ENCODE measurements at regions of chr3 and their contacts with region 1.

Region 1: GRCh38 chr3:50358911-50359759 is at the start of gene TMEM115:
- DNase-seq: peak; percentile 87 to 99 (median 94)
- ATAC-seq: peak; percentile 100
- H3K4me3 ChIP-seq: peak within 1 kb of the TSS; percentile 58 to 76
- H3K4me3 Mint-ChIP-seq: peak within 1 kb of the TSS; percentile 97
- H3K27ac ChIP-seq: peak within 1 kb of the TSS; percentile 58 to 86
- H3K27ac Mint-ChIP-seq: peak within 1 kb of the TSS; percentile 97
- H3K4me1 ChIP-seq: peaks cover 33% of the 10 kb centered on the region
- H3K4me1 Mint-ChIP-seq: peaks cover 52% of the 10 kb centered on the region
- H3K27me3 ChIP-seq: no peaks in the 10 kb centered on the region
- H3K27me3 Mint-ChIP-seq: no peaks in the 10 kb centered on the region
- CTCF ChIP-seq: no peak
- total RNA-seq, gene TMEM115: 15.2 to 17.8 TPM

Region 2: GRCh38 chr3:50088725-50089608 is 270.2 kb before region 1 on chr3 and contains the start of gene RBM5:
- CTCF ChIA-PET with region 1: no interaction called
- POLR2A ChIA-PET with region 1: no interaction called
- intact Hi-C with region 1: loop called in 1 of 2 experiments (anchors 2 kb)
- DNase-seq: peak; percentile 80 to 94 (median 92)
- ATAC-seq: peak; percentile 99
- H3K4me3 ChIP-seq: peak within 1 kb of the TSS; percentile 100
- H3K4me3 Mint-ChIP-seq: peak within 1 kb of the TSS; percentile 96
- H3K27ac ChIP-seq: peak within 1 kb of the TSS; percentile 97 to 99
- H3K27ac Mint-ChIP-seq: peak within 1 kb of the TSS; percentile 98
- H3K4me1 ChIP-seq: peaks cover 27% of the 10 kb centered on the region
- H3K4me1 Mint-ChIP-seq: peaks cover 34% of the 10 kb centered on the region
- H3K27me3 ChIP-seq: no peaks in the 10 kb centered on the region
- H3K27me3 Mint-ChIP-seq: no peaks in the 10 kb centered on the region
- CTCF ChIP-seq: no peak
- total RNA-seq, gene RBM5: 376 to 409 TPM

Region 3: DNA sequence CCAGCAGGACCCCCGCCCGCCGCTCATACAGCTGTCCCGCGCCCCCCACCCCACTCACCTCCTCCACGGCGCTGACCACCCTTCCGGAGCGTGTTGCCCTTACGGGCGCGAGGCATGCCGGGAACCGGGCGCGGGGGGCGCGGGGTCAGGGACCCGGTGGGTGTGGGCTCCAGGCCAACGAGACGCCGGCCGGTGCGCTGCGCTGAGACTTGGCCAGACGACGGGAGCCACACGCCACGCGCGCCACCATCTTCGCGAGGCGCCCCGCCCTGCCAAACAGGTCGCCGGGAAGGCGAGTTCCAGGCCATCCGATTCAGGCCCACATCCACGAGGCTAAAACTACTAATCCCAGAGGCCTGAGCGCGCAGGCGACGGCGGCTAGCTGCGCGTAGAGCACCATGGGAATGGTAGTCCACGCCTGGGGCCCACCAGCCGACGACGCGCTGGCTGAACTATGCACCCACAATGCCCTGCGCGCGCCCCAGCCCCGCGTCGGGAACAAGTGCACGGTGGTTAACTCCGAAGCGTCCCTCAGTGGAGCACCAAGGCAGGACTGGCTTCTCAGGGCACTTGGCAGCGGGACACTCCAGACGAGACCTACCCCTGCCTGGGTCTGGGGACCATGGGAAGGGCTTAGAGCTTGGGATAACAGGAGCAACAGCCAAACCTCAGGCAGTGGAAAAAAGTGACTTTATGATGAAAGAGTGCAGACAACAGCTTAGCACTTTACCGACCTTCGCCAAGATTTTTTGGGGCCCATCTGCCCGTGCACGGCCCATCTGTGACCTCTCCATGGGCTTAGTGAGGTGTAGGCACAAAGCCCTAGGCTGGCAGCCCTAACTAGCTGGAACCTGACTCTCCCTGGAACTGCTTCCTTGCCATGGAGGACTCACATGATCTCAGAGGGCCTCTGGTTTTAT is 66.7 kb before region 1 on chr3 and contains the start of gene IFRD2:
- CTCF ChIA-PET with region 1: no interaction called
- POLR2A ChIA-PET with region 1: no interaction called
- intact Hi-C with region 1: loop called (anchors 1 kb)
- DNase-seq: peak in 8 of 9 experiments; percentile 92 to 98 (median 94)
- ATAC-seq: peak; percentile 98
- H3K4me3 ChIP-seq: peak within 1 kb of the TSS; percentile 87 to 88
- H3K4me3 Mint-ChIP-seq: peak within 1 kb of the TSS; percentile 89
- H3K27ac ChIP-seq: peak within 1 kb of the TSS; percentile 68 to 81
- H3K27ac Mint-ChIP-seq: peak within 1 kb of the TSS; percentile 96
- H3K4me1 ChIP-seq: peaks cover 13% of the 10 kb centered on the region
- H3K4me1 Mint-ChIP-seq: peaks cover 18% of the 10 kb centered on the region
- H3K27me3 ChIP-seq: no peaks in the 10 kb centered on the region
- H3K27me3 Mint-ChIP-seq: no peaks in the 10 kb centered on the region
- CTCF ChIP-seq: no peak
- total RNA-seq, gene IFRD2: 42.4 to 42.9 TPM

Region 4: DNA sequence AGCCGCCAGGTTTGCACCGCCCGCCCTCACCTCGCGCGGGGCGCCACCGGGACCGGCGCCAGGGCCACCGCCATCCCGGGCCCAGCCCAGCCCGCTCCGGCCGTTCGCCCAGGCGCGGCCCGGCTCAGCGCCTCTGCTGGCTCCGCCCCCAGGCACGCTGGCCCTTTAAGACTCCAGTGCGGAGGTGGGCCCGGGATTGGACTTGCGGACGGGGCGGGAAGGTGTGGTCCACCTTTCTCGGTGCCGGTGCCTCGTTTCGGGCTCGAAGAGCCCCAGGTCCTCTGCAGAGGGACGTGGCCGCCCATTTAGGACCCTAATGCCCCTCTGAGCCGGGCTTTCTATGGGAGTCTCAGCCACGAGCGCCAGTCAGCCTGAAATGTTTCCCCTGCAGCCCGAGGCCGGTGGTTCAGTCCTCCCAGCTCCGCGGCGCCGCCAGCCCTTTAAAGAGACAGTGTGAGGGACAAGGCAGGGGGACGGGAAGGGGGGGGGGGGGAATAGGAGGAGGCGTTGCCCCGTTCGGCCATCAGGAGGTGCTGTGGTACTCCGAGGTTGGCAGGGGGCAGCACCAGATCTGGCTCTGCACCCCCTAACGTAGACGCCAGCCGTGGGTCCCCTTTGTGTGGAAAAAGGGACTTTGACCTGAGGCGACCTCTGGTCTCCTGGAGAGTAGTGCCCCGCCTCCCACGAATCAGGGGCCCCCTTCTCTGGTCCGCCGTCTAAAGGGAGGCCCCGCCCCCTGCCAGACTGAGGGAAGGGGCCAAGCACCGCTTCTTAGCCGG is 37.6 kb before region 1 on chr3:
- CTCF ChIA-PET with region 1: interaction called, 3 read pairs
- POLR2A ChIA-PET with region 1: no interaction called
- intact Hi-C with region 1: loop called in 1 of 2 experiments (anchors 2 kb)
- DNase-seq: peak; percentile 65 to 89 (median 82)
- ATAC-seq: peak; percentile 69
- H3K4me3 ChIP-seq: peak overlapping the region; percentile 71 to 96
- H3K4me3 Mint-ChIP-seq: peak overlapping the region; percentile 85
- H3K27ac ChIP-seq: peak overlapping the region; percentile 77 to 94
- H3K27ac Mint-ChIP-seq: peak overlapping the region; percentile 92
- H3K4me1 ChIP-seq: peaks cover 30% of the 10 kb centered on the region
- H3K4me1 Mint-ChIP-seq: peaks cover 41% of the 10 kb centered on the region
- H3K27me3 ChIP-seq: no peaks in the 10 kb centered on the region
- H3K27me3 Mint-ChIP-seq: no peaks in the 10 kb centered on the region
- CTCF ChIP-seq: peak; percentile 47

Region 5: GRCh38 chr3:50337191-50337841 is 21.8 kb before region 1 on chr3:
- CTCF ChIA-PET with region 1: interaction called, 4 read pairs
- POLR2A ChIA-PET with region 1: interaction called, 129 read pairs
- intact Hi-C with region 1: loop called in 1 of 2 experiments (anchors 1 kb)
- DNase-seq: peak; percentile 74 to 98 (median 93)
- ATAC-seq: peak; percentile 81
- H3K4me3 ChIP-seq: peak overlapping the region; percentile 88 to 98
- H3K4me3 Mint-ChIP-seq: peak overlapping the region; percentile 98
- H3K27ac ChIP-seq: peak overlapping the region; percentile 91 to 93
- H3K27ac Mint-ChIP-seq: peak overlapping the region; percentile 96
- H3K4me1 ChIP-seq: peaks cover 77% of the 10 kb centered on the region
- H3K4me1 Mint-ChIP-seq: peaks cover 74% of the 10 kb centered on the region
- H3K27me3 ChIP-seq: no peaks in the 10 kb centered on the region
- H3K27me3 Mint-ChIP-seq: no peaks in the 10 kb centered on the region
- CTCF ChIP-seq: no peak

Region 6: GRCh38 chr3:50442945-50443579 is 83.9 kb after region 1 on chr3:
- CTCF ChIA-PET with region 1: no interaction called
- POLR2A ChIA-PET with region 1: no interaction called
- intact Hi-C with region 1: no loop called
- DNase-seq: no peak
- ATAC-seq: no peak
- H3K4me3 ChIP-seq: no peak overlapping the region
- H3K4me3 Mint-ChIP-seq: no peak overlapping the region
- H3K27ac ChIP-seq: no peak overlapping the region
- H3K27ac Mint-ChIP-seq: no peak overlapping the region
- H3K4me1 ChIP-seq: peaks cover 2% of the 10 kb centered on the region
- H3K4me1 Mint-ChIP-seq: peaks cover 10% of the 10 kb centered on the region
- H3K27me3 ChIP-seq: no peaks in the 10 kb centered on the region
- H3K27me3 Mint-ChIP-seq: no peaks in the 10 kb centered on the region
- CTCF ChIP-seq: no peak

Region 7: DNA sequence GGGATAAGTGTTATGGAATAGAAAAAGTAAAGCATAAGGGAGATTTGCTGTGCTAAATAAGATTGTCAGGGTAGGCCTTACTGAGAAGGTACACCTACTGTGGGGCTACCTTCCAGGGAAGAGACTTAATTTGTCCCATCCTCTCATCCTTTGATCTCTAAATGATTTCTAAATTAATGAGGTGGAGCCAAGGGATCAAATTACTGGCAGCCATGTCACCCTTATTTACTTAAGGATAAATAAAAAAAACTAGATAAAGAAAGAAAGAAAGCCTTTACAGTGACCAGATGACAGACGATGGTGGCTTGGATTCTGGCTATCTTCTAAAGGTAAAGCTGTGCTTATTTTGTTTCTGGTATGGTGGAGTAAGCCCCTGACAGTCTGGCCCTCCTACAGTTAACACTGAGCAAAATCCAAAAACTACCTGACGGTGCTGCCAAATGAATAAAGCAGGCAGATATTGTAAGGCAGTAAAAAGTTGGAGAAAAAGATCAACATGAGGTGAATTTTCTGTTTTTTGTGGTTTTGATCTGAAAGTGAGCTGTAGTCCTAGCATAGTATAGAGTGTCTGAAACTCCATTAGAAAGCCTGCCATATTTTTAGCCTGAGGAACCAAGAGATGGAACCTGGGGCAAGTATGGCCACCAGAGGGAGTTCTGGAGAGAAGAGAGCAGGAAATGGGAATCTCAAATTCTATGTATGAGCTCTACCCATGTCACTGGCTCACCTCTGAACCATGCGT is 740.8 kb after region 1 on chr3:
- CTCF ChIA-PET with region 1: no interaction called
- POLR2A ChIA-PET with region 1: no interaction called
- intact Hi-C with region 1: no loop called
- DNase-seq: peak in 2 of 9 experiments; percentile 15 to 29
- ATAC-seq: no peak
- H3K4me3 ChIP-seq: no peak overlapping the region
- H3K4me3 Mint-ChIP-seq: no peak overlapping the region
- H3K27ac ChIP-seq: no peak overlapping the region
- H3K27ac Mint-ChIP-seq: no peak overlapping the region
- H3K4me1 ChIP-seq: no peaks in the 10 kb centered on the region
- H3K4me1 Mint-ChIP-seq: peaks cover 18% of the 10 kb centered on the region
- H3K27me3 ChIP-seq: no peaks in the 10 kb centered on the region
- H3K27me3 Mint-ChIP-seq: no peaks in the 10 kb centered on the region
- CTCF ChIP-seq: no peak

Region 8: GRCh38 chr3:51995346-51996163 is 1636.4 kb after region 1 on chr3 and contains the start of gene RPL29:
- CTCF ChIA-PET with region 1: no interaction called
- POLR2A ChIA-PET with region 1: no interaction called
- intact Hi-C with region 1: loop called in 1 of 2 experiments (anchors 5 kb)
- DNase-seq: peak; percentile 85 to 97 (median 91)
- ATAC-seq: peak; percentile 98
- H3K4me3 ChIP-seq: peak within 1 kb of the TSS; percentile 82 to 93
- H3K4me3 Mint-ChIP-seq: peak within 1 kb of the TSS; percentile 100
- H3K27ac ChIP-seq: peak within 1 kb of the TSS; percentile 86 to 92
- H3K27ac Mint-ChIP-seq: peak within 1 kb of the TSS; percentile 100
- H3K4me1 ChIP-seq: peaks cover 14% of the 10 kb centered on the region
- H3K4me1 Mint-ChIP-seq: peaks cover 35% of the 10 kb centered on the region
- H3K27me3 ChIP-seq: no peaks in the 10 kb centered on the region
- H3K27me3 Mint-ChIP-seq: no peaks in the 10 kb centered on the region
- CTCF ChIP-seq: no peak
- total RNA-seq, gene RPL29: 1,694 to 1,736 TPM